GM10248 (cell line): ENCODE measurements at regions of chr9 and their contacts with region 1.

Region 1: DNA sequence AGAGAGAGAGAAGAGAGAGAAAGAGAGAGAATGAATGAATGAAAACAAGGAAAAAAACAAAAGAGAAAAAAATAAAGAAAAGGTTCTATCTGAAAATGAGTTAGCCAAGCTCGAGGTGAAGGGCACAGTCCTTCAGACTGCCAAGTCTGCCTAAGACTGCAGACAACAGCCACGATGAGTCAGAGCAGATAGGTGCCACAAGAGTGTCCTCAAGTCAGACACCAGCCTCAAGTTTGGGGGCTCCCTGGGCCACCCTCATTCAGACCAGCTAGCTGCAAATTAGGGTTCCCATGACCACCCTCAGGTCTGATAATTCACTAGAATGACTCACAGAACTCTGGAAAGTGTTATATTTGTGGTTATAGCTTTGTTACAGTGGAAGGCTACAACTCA is 13.9 kb upstream of the HABP4 start:
- DNase-seq: no peak
- CTCF ChIP-seq: no peak

Region 2: DNA sequence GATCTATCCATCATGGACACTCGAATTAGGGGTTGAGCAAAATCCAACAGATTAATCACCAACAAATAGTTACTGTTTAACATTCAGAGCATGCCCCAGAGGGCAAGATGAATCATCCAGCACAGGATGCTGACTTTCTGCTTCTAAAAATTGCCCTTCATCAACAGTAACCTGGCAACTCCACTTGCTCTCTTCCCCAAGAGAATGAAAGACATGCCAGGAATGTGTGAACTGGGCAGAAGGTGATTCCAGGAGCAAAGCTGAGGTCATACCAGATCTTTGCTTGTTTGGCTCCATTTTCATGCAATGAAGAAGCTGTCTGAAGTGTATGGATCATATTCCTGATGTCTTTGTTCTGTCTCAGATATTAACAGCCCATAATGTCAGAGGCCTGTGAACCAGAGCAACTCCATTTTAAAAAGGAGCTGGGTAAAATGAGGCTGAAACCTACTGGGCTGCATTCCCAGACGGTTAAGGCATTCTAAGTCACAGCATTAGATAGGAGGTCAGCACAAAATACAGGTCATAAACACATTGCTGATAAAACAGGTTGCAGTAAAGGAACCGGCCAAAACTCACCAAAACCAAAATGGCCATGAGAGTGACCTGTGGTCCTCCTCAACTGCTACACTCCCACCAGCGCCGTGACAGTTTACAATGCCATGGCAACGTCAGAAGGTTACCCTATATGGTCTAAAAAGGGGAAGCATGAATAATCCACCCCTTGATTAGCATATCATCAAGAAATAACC is 15.4 kb before region 1 on chr9:
- CTCF ChIA-PET with region 1: interaction called, 28 read pairs
- POLR2A ChIA-PET with region 1: no interaction called
- DNase-seq: peak; percentile 36
- CTCF ChIP-seq: no peak

Region 3: GRCh38 chr9:96449845-96450612 is 14.0 kb after region 1 on chr9 and contains the start of gene HABP4:
- CTCF ChIA-PET with region 1: interaction called, 11 read pairs
- POLR2A ChIA-PET with region 1: no interaction called
- DNase-seq: peak; percentile 98
- CTCF ChIP-seq: no peak

Region 4: DNA sequence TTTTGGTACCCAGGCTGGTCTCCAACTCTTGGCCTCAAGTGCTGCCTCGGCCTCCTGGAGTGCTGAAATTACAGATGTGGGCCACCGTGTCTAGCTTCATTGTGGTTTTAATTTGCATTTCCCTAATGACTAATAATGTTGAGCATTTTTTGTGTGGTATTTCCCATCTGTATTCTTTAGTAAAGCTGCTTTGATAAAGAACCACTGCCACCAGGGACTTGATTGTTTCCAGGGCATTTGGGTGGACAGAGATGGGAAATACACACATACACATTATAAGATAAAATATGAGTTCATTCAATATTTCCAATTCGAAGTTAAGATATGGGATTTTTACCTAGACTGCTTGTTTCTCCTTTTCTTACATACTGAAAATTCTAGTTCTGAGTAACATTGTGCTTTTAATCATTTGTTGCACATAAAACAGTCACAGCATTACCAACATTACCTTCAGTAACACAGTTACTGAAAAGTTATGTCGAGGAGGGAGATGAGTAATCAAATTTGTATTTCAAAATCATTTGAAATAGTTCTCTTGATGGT is 42.8 kb after region 1 on chr9:
- CTCF ChIA-PET with region 1: no interaction called
- POLR2A ChIA-PET with region 1: no interaction called
- DNase-seq: no peak
- CTCF ChIP-seq: no peak